ENCODE measurements at regions of chr12 and their contacts with region 1.

Region 1: GRCh38 chr12:70733385-70733784 is 96.2 kb upstream of the PTPRB start:
- DNase-seq: peak; percentile 14
- ATAC-seq: peak; percentile 83
- H3K4me3 Mint-ChIP-seq: no peak overlapping the region
- H3K27ac Mint-ChIP-seq: no peak overlapping the region
- H3K4me1 Mint-ChIP-seq: no peaks in the 10 kb centered on the region
- H3K27me3 Mint-ChIP-seq: no peaks in the 10 kb centered on the region

Region 2: DNA sequence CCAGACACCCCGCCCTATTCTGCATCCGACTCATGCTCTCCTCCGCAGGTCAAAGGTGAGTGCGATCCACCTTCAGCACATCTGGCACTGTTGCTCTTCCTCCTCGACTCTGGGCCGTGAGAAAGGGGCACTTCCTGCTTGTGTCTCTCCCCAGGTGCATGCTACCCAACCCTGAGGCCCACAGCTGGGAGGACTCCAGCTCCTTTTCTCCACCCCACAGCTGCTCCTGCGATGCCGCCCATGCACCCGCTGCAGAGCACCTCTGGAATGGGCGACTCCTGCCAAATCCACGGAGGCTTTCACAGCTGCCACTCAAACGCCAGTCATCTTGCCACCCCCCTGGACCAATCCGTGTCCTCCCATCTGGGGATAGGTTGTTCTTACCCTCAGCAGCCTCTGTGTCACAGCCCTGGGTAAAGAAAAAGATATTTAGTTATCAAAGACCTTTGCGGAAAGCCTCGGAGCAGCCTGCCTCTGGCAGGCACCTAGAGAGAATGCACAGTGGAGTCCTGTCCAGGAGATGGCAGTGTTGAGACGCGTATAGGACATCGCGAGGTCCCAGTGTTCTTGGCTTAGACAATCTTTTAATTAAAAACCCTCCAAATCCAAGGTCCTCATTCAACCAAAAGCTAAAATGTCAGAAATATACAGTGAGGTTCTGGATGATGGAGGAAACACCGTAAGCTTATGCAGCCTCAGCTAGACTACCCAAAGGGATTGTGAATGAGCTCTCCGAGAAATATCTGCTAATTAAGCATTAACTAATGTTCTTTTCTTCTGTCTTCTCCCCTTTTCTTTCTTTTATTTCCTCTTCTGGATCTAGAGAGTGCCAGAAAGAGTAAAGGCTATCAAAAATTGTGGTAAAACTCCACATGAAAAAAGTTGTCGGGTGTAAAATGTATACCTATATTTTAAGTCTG is 854.1 kb before region 1 on chr12:
- CTCF ChIA-PET with region 1: interaction called, 15 read pairs
- POLR2A ChIA-PET with region 1: no interaction called
- intact Hi-C with region 1: loop called (anchors 2 kb)
- DNase-seq: peak; percentile 82
- ATAC-seq: peak; percentile 93
- H3K4me3 Mint-ChIP-seq: no peak overlapping the region
- H3K27ac Mint-ChIP-seq: no peak overlapping the region
- H3K4me1 Mint-ChIP-seq: peaks cover 6% of the 10 kb centered on the region
- H3K27me3 Mint-ChIP-seq: peaks cover 17% of the 10 kb centered on the region

Region 3: DNA sequence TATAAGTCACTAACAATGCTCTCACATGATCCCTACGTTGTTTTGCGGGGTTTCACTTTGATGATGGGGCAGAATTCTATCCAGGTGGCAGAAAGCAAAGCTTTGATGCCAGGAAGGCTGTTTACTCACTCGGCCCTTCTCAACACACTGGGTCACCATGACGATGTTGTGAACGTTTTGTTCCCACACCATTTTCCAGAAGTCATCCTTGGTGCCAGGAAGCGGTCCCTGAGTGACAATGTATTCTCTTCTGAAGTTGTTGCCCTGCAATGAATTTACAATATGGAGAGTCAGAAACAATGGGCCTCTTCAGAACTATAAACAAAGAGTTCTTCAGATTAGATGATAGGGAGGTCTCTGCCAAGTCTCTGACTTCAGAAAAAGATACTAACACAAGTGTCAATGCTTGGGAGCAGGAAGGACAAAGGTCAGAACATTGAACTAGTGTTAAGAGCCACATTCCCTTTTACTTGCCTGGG is 197.4 kb before region 1 on chr12:
- CTCF ChIA-PET with region 1: no interaction called
- POLR2A ChIA-PET with region 1: no interaction called
- intact Hi-C with region 1: no loop called
- DNase-seq: no peak
- ATAC-seq: no peak
- H3K4me3 Mint-ChIP-seq: no peak overlapping the region
- H3K27ac Mint-ChIP-seq: no peak overlapping the region
- H3K4me1 Mint-ChIP-seq: no peaks in the 10 kb centered on the region
- H3K27me3 Mint-ChIP-seq: peaks cover 8% of the 10 kb centered on the region

Region 4: GRCh38 chr12:70590051-70590450 is 143.3 kb before region 1 on chr12:
- CTCF ChIA-PET with region 1: no interaction called
- POLR2A ChIA-PET with region 1: no interaction called
- intact Hi-C with region 1: loop called (anchors 1 to 2 kb)
- DNase-seq: peak; percentile 80
- ATAC-seq: peak; percentile 74
- H3K4me3 Mint-ChIP-seq: no peak overlapping the region
- H3K27ac Mint-ChIP-seq: no peak overlapping the region
- H3K4me1 Mint-ChIP-seq: no peaks in the 10 kb centered on the region
- H3K27me3 Mint-ChIP-seq: peaks cover 22% of the 10 kb centered on the region

Region 5: GRCh38 chr12:71036526-71036925 is 303.1 kb after region 1 on chr12:
- CTCF ChIA-PET with region 1: no interaction called
- POLR2A ChIA-PET with region 1: no interaction called
- intact Hi-C with region 1: loop called in 1 of 2 experiments (anchors 10 kb)
- DNase-seq: no peak
- ATAC-seq: no peak
- H3K4me3 Mint-ChIP-seq: no peak overlapping the region
- H3K27ac Mint-ChIP-seq: no peak overlapping the region
- H3K4me1 Mint-ChIP-seq: no peaks in the 10 kb centered on the region
- H3K27me3 Mint-ChIP-seq: no peaks in the 10 kb centered on the region

Region 6: DNA sequence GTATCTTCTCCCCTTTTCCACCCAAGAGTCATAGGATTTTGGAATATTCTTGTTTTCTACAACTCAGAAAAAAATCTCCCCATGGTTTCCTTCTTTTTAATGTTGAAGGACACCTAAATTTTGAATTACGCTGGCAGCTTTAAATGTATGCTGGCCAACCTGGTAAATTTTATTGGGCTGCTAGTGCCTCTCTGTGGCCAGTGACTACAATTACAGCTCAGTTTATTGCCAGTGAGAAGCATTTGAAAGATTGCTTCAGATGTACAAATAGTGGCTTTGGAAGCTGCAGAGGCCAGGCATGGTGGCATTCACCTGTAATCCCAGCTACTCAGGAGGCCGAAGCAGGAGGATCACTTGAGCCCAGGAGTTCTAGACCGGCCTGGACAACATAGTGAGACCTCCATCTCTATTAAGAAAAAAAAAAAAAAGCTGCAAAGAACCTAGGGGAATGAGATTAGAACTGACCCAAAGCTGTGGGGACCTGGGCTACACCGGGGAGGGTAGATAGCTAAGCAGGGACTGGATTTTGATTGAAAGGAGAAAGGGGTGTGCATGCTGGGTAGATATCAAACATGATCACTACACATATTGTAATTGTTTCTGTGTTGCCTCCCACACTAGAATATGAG is 1013.7 kb after region 1 on chr12:
- CTCF ChIA-PET with region 1: interaction called, 3 read pairs
- POLR2A ChIA-PET with region 1: no interaction called
- intact Hi-C with region 1: loop called in 1 of 2 experiments (anchors 5 kb)
- DNase-seq: peak; percentile 62
- ATAC-seq: peak; percentile 79
- H3K4me3 Mint-ChIP-seq: no peak overlapping the region
- H3K27ac Mint-ChIP-seq: no peak overlapping the region
- H3K4me1 Mint-ChIP-seq: no peaks in the 10 kb centered on the region
- H3K27me3 Mint-ChIP-seq: peaks cover 10% of the 10 kb centered on the region

Measured in activated CD4-positive, alpha-beta T cell treated with anti-CD3 and anti-CD28 coated beads for 36 hours (primary cell).